ENCODE measurements at regions of chr5 and their contacts with region 1.

Region 1: DNA sequence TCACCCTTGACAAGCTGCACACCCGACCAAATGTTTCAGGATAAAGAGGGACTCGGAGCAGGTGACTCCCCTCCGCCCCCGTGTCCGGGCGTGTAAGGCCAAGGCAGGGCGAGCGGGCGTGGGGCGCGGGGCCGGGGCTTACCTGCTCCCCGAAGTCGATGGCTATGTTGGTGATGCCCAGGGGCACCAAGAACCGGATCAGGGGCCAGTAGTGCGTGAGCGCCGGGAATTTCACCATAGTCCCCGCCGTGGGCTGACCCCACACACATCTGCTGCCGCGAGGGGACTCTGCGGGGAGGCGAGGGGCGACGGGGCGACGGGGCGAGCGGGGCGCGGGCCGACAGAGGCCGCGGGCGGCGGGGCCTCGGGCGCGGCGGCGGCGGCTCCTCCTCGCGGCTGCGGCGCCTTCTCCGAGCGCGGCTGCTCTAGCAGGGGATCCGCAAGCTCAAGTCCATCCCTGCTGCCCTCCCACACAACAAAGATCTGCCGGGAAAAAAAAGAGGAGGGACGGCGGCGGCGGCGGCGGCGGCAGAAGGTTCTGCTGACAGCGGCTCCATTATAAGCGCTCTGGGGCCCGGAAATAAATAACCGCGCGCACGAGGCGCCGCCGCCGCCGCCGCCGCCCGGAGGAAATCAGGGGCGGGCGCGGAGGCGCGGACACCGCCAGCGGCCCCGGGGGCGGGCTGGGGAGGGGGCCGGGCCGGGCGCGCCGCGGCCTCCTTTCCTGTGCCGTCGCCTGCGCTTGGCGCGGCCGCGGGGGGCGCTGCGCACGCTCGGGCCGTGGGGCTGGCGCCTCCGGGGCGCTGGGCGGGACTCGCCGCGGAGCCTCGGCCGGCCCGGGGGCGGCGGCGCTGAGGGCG is at the start of gene ANKH:
- DNase-seq: peak; percentile 62
- H3K4me3 ChIP-seq: peak within 1 kb of the TSS; percentile 75 to 91 (median 86)
- H3K27ac ChIP-seq: peak within 1 kb of the TSS; percentile 59
- H3K4me1 ChIP-seq: peaks cover 20% of the 10 kb centered on the region
- H3K27me3 ChIP-seq: peaks cover 4% of the 10 kb centered on the region in 2 experiments
- CTCF ChIP-seq: peak in 1 of 2 donors; percentile 28
- POLR2A ChIP-seq: no peak
- total RNA-seq, gene ANKH: 31.4 and 39.5 TPM in 2 replicates

Region 2: GRCh38 chr5:14739538-14739937 is 131.9 kb before region 1 on chr5:
- CTCF ChIA-PET with region 1: interaction called, 3 read pairs
- POLR2A ChIA-PET with region 1: no interaction called
- dilution Hi-C with region 1: no loop called
- intact Hi-C with region 1: loop called (anchors 1 kb)
- DNase-seq: peak; percentile 79
- H3K4me3 ChIP-seq: no peak overlapping the region
- H3K27ac ChIP-seq: peak overlapping the region; percentile 58
- H3K4me1 ChIP-seq: peaks cover 17% of the 10 kb centered on the region
- H3K27me3 ChIP-seq: no peaks in the 10 kb centered on the region
- CTCF ChIP-seq: no peak
- POLR2A ChIP-seq: no peak

Region 3: GRCh38 chr5:14783691-14784206 is 87.7 kb before region 1 on chr5:
- CTCF ChIA-PET with region 1: no interaction called
- POLR2A ChIA-PET with region 1: no interaction called
- dilution Hi-C with region 1: no loop called
- intact Hi-C with region 1: no loop called
- DNase-seq: no peak
- H3K4me3 ChIP-seq: no peak overlapping the region
- H3K27ac ChIP-seq: no peak overlapping the region
- H3K4me1 ChIP-seq: no peaks in the 10 kb centered on the region
- H3K27me3 ChIP-seq: no peaks in the 10 kb centered on the region
- CTCF ChIP-seq: no peak
- POLR2A ChIP-seq: no peak

Region 4: DNA sequence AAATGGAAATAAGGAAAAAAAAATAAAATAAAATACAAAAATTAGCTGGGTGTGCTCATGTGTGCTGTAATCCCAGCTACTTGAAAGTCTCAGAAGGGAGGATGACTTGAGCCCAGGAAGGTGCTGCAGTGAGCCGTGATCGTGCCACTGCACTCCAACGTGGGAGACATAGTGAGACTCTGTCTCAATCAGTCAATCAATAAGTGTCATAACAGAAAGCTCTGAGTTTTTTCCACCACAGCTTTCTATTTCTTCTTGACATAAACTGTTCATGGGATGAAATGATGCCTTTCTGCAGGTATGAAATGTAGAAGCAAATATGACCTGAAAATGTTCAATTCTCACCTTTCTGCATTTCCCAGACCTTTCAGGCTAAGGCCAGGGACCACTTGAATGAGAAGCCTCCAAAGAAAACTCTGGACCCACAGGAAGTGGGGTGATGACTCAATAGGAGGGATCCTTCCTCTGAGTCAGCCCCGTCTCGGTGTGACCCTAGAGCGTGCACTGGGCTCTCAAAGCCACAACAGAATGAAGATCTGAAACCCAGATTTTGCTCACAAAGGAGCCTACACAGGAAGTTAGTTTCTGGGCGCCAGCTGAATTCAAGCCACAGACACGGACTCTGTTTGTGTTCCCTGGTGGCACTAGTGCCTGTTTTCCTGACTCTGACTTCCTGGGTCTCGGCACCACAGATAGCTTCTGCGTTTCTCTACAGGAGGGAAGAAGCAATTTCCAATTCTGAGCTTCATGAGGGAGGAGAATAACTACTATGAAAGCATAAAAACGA is 61.9 kb before region 1 on chr5:
- CTCF ChIA-PET with region 1: interaction called, 8 read pairs
- POLR2A ChIA-PET with region 1: no interaction called
- dilution Hi-C with region 1: no loop called
- intact Hi-C with region 1: loop called (anchors 1 kb)
- DNase-seq: peak; percentile 75
- H3K4me3 ChIP-seq: no peak overlapping the region
- H3K27ac ChIP-seq: peak overlapping the region; percentile 50
- H3K4me1 ChIP-seq: peaks cover 20% of the 10 kb centered on the region
- H3K27me3 ChIP-seq: no peaks in the 10 kb centered on the region
- CTCF ChIP-seq: no peak
- POLR2A ChIP-seq: no peak

Region 5: DNA sequence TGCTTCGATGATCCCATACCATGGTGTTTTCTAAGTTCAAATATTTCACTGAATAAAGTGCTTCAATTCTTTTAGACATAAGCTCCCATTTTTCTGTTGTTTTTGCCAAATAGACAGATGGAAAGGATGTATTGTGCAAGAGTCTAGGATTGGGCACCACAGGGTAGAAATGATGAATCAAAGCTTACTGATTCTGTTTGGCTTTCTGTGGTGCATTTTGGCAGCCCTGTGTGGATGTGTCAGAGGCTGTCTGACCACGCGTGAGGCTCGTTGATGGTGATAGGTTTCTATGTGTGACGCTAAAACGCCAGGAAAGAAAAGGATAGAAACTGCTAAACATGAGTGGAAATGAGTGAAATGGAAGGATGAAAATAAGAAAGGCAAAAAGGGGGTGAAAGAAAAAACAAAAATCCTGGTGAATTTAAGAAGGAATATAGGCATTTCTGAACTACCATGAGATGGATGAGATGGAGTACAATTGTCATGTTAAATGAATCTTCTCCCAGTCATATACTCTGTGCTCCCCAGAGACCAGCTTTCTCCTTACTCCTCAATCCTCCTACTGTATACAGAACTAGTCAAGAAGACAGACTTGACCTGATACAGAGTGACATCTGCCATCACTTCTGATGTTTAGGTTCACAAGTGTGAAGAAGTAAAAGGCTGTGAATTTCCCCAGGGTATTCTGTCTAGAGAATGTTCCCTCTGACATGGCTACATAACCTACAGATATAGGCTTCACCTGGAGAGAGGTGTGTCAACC is 54.3 kb before region 1 on chr5:
- CTCF ChIA-PET with region 1: interaction called, 3 read pairs
- POLR2A ChIA-PET with region 1: no interaction called
- dilution Hi-C with region 1: no loop called
- intact Hi-C with region 1: loop called (anchors 5 kb)
- DNase-seq: no peak
- H3K4me3 ChIP-seq: no peak overlapping the region
- H3K27ac ChIP-seq: no peak overlapping the region
- H3K4me1 ChIP-seq: peaks cover 11% of the 10 kb centered on the region
- H3K27me3 ChIP-seq: no peaks in the 10 kb centered on the region
- CTCF ChIP-seq: no peak
- POLR2A ChIP-seq: no peak

Region 6: DNA sequence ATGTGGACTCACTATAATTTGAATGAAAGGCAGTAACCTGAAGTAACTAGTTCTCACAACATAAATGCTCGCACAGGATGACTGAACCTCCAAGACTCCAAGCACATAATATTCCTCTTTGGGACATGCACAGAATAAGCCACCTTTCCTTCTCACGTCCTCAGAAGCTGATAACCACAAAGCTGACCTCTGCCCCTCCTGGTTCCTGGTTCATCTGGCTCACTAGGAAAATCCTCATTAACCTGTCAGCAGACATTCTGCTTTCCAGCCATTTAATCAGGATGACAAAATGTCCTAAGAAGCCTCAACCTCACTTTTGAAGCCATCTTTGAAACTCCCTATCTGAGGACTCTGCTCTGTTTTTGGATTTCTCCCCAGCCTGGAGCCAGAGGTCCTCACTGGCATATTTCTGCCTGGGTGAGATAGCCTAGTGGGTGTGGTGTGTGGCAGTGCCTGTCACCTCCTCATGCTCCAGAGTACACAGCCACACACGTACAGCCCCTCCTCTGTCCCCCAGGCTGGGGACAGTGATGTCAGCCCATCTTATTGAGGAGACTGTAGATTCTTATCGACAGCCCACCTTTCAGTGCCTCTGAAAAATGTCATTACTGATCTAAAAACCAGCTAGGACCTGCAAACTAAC is 10.2 kb before region 1 on chr5:
- CTCF ChIA-PET with region 1: interaction called, 12 read pairs
- POLR2A ChIA-PET with region 1: no interaction called
- dilution Hi-C with region 1: no loop called
- intact Hi-C with region 1: no loop called
- DNase-seq: no peak
- H3K4me3 ChIP-seq: no peak overlapping the region
- H3K27ac ChIP-seq: no peak overlapping the region
- H3K4me1 ChIP-seq: no peaks in the 10 kb centered on the region
- H3K27me3 ChIP-seq: no peaks in the 10 kb centered on the region
- CTCF ChIP-seq: no peak
- POLR2A ChIP-seq: no peak

Region 7: GRCh38 chr5:15168358-15168757 is 296.9 kb after region 1 on chr5:
- CTCF ChIA-PET with region 1: no interaction called
- POLR2A ChIA-PET with region 1: no interaction called
- dilution Hi-C with region 1: no loop called
- intact Hi-C with region 1: no loop called
- DNase-seq: no peak
- H3K4me3 ChIP-seq: no peak overlapping the region
- H3K27ac ChIP-seq: no peak overlapping the region
- H3K4me1 ChIP-seq: no peaks in the 10 kb centered on the region
- H3K27me3 ChIP-seq: no peaks in the 10 kb centered on the region
- CTCF ChIP-seq: no peak
- POLR2A ChIP-seq: no peak